CD8-positive, alpha-beta T cell (primary cell): ENCODE measurements at regions of chr2 and their contacts with region 1.

Region 1: GRCh38 chr2:12716282-12717190 is at the start of gene TRIB2:
- DNase-seq: peak; percentile 86 to 96 (median 91)
- ATAC-seq: peak; percentile 79
- H3K4me3 ChIP-seq: peak within 1 kb of the TSS; percentile 82 to 96
- H3K4me3 Mint-ChIP-seq: peak within 1 kb of the TSS; percentile 97
- H3K27ac ChIP-seq: peak within 1 kb of the TSS; percentile 72 to 81
- H3K27ac Mint-ChIP-seq: peak within 1 kb of the TSS; percentile 93
- H3K4me1 ChIP-seq: peaks cover 35% of the 10 kb centered on the region
- H3K4me1 Mint-ChIP-seq: peaks cover 46% of the 10 kb centered on the region
- H3K27me3 ChIP-seq: no peaks in the 10 kb centered on the region
- H3K27me3 Mint-ChIP-seq: no peaks in the 10 kb centered on the region
- CTCF ChIP-seq: peak; percentile 38
- total RNA-seq, gene TRIB2: 46.6 to 54.4 TPM

Region 2: DNA sequence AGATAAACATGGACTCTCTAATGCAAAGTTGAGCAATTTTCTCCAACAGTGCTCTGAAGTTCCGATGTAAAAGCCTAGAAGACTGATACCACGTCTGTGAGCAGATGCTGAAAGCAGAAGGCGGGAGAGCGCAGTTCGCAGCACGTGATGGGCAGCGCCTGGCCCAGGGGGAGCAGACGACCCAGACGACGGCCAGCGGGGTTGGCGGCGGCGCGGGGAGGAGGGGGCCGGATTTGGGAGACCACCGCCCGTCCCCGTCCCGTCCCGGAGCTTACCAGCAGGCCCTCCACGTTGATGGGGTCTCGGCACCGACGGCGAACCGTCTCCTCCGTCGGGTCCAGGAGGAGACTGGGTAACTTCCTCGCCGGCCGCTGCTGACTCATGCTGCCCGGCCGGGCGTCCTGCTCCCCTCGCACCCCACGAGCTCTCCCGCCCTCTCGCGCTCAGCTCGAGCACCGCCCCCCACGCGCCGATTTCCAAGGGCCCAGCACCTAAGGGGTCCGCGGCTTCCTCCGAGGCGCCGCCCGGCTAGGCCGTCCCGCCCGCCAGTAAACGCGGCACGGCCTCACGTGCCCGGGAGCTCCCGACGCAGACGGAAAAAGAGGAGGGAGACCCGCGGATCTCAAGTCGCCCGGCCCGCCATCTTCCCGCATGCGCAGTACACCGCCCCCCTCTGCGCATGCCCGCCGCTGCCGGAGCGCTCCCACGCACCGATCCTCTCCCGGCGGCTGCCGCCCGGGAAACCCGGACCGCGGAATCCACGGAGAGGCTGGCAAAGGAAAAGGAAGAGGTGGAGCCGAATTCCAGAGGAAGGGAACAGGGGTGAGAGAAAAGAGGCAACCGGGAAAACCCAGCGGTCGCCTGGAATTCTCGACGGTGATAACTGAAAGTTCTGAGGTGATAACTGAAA is 1250.8 kb before region 1 on chr2 and contains the start of gene E2F6:
- CTCF ChIA-PET with region 1: no interaction called
- POLR2A ChIA-PET with region 1: no interaction called
- intact Hi-C with region 1: loop called in 1 of 2 experiments (anchors 5 kb)
- DNase-seq: peak; percentile 68 to 91 (median 81)
- ATAC-seq: peak; percentile 85
- H3K4me3 ChIP-seq: peak within 1 kb of the TSS; percentile 83 to 87
- H3K4me3 Mint-ChIP-seq: peak within 1 kb of the TSS; percentile 96
- H3K27ac ChIP-seq: peak within 1 kb of the TSS; percentile 51 to 70
- H3K27ac Mint-ChIP-seq: peak within 1 kb of the TSS; percentile 91
- H3K4me1 ChIP-seq: peaks cover 13% of the 10 kb centered on the region
- H3K4me1 Mint-ChIP-seq: peaks cover 37% of the 10 kb centered on the region
- H3K27me3 ChIP-seq: no peaks in the 10 kb centered on the region
- H3K27me3 Mint-ChIP-seq: no peaks in the 10 kb centered on the region
- CTCF ChIP-seq: no peak
- total RNA-seq, gene E2F6: 4.9 to 5.0 TPM

Region 3: DNA sequence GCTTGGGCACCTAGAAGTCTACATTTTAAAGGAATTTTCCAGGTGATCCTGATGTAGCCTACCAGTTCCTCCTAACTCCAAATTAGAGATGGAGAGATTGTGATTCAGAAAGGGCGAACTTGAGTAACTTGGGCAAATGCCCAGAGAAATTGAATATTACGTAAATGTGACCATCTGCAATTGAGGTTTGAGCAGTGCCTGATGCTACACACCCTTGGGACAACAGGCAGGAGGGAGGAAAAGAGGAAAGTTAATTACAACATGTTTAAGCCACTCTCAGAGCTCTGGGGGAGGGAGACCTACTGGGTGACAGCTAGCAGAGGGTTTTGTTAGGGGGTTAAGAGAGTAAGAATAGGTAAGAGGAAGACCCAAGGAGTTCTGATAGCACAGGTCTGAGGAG is 761.2 kb before region 1 on chr2:
- CTCF ChIA-PET with region 1: interaction called, 3 read pairs
- POLR2A ChIA-PET with region 1: no interaction called
- intact Hi-C with region 1: loop called in 1 of 2 experiments (anchors 10 kb)
- DNase-seq: no peak
- ATAC-seq: no peak
- H3K4me3 ChIP-seq: no peak overlapping the region
- H3K4me3 Mint-ChIP-seq: no peak overlapping the region
- H3K27ac ChIP-seq: no peak overlapping the region
- H3K27ac Mint-ChIP-seq: no peak overlapping the region
- H3K4me1 ChIP-seq: no peaks in the 10 kb centered on the region
- H3K4me1 Mint-ChIP-seq: peaks cover 5% of the 10 kb centered on the region
- H3K27me3 ChIP-seq: no peaks in the 10 kb centered on the region
- H3K27me3 Mint-ChIP-seq: peaks cover 6% of the 10 kb centered on the region
- CTCF ChIP-seq: no peak

Region 4: GRCh38 chr2:12176623-12177454 is 539.7 kb before region 1 on chr2:
- CTCF ChIA-PET with region 1: no interaction called
- POLR2A ChIA-PET with region 1: interaction called, 3 read pairs
- intact Hi-C with region 1: loop called in 1 of 2 experiments (anchors 5 kb)
- DNase-seq: peak in 2 of 9 experiments; percentile 27 to 31
- ATAC-seq: peak; percentile 30
- H3K4me3 ChIP-seq: no peak overlapping the region
- H3K4me3 Mint-ChIP-seq: peak overlapping the region; percentile 66
- H3K27ac ChIP-seq: no peak overlapping the region
- H3K27ac Mint-ChIP-seq: peak overlapping the region; percentile 69
- H3K4me1 ChIP-seq: peaks cover 27% of the 10 kb centered on the region
- H3K4me1 Mint-ChIP-seq: peaks cover 50% of the 10 kb centered on the region
- H3K27me3 ChIP-seq: no peaks in the 10 kb centered on the region
- H3K27me3 Mint-ChIP-seq: no peaks in the 10 kb centered on the region
- CTCF ChIP-seq: no peak

Region 5: GRCh38 chr2:12456293-12457151 is 260.0 kb before region 1 on chr2:
- CTCF ChIA-PET with region 1: interaction called, 11 read pairs
- POLR2A ChIA-PET with region 1: interaction called, 3 read pairs
- intact Hi-C with region 1: no loop called
- DNase-seq: peak; percentile 23 to 76 (median 47)
- ATAC-seq: peak; percentile 81
- H3K4me3 ChIP-seq: peak overlapping the region; percentile 37 to 50
- H3K4me3 Mint-ChIP-seq: peak overlapping the region; percentile 83
- H3K27ac ChIP-seq: peak overlapping the region; percentile 39 to 78
- H3K27ac Mint-ChIP-seq: peak overlapping the region; percentile 95
- H3K4me1 ChIP-seq: peaks cover 14% of the 10 kb centered on the region
- H3K4me1 Mint-ChIP-seq: peaks cover 36% of the 10 kb centered on the region
- H3K27me3 ChIP-seq: no peaks in the 10 kb centered on the region
- H3K27me3 Mint-ChIP-seq: no peaks in the 10 kb centered on the region
- CTCF ChIP-seq: no peak

Region 6: DNA sequence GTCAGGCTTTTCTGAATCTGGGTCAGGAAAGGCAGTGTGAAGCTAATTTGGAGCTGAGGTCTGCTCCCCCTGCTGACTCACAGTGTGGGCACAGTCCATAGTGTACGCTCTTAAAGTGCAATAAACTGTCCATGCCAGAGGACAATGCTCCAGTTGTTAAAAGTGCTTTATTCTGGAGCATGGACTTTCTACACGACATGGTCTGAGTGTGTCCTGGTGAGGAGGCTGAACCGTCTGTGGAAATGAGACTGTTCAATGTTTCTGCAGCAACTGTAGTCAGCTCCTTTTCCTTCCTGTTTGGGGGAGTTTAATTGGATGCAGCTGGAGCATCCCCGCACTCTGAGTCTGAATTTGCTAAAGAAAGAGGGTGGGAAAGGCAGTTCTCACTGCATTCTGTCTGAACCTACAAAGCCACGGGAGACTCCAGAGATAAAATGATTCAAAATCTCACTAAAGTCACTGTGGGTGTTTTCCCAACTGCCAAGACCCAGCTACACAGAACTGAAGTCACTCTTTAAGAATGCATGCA is 110.0 kb before region 1 on chr2:
- CTCF ChIA-PET with region 1: interaction called, 3 read pairs
- POLR2A ChIA-PET with region 1: no interaction called
- intact Hi-C with region 1: loop called in 1 of 2 experiments (anchors 5 kb)
- DNase-seq: peak in 2 of 9 experiments; percentile 24 to 27
- ATAC-seq: no peak
- H3K4me3 ChIP-seq: no peak overlapping the region
- H3K4me3 Mint-ChIP-seq: no peak overlapping the region
- H3K27ac ChIP-seq: no peak overlapping the region
- H3K27ac Mint-ChIP-seq: no peak overlapping the region
- H3K4me1 ChIP-seq: peaks cover 8% of the 10 kb centered on the region
- H3K4me1 Mint-ChIP-seq: peaks cover 17% of the 10 kb centered on the region
- H3K27me3 ChIP-seq: no peaks in the 10 kb centered on the region
- H3K27me3 Mint-ChIP-seq: no peaks in the 10 kb centered on the region
- CTCF ChIP-seq: no peak

Region 7: GRCh38 chr2:12694990-12695774 is 21.4 kb before region 1 on chr2:
- CTCF ChIA-PET with region 1: no interaction called
- POLR2A ChIA-PET with region 1: no interaction called
- intact Hi-C with region 1: no loop called
- DNase-seq: no peak
- ATAC-seq: no peak
- H3K4me3 ChIP-seq: no peak overlapping the region
- H3K4me3 Mint-ChIP-seq: no peak overlapping the region
- H3K27ac ChIP-seq: no peak overlapping the region
- H3K27ac Mint-ChIP-seq: no peak overlapping the region
- H3K4me1 ChIP-seq: no peaks in the 10 kb centered on the region
- H3K4me1 Mint-ChIP-seq: no peaks in the 10 kb centered on the region
- H3K27me3 ChIP-seq: no peaks in the 10 kb centered on the region
- H3K27me3 Mint-ChIP-seq: no peaks in the 10 kb centered on the region
- CTCF ChIP-seq: no peak

Region 8: GRCh38 chr2:12931186-12931844 is 214.8 kb after region 1 on chr2:
- CTCF ChIA-PET with region 1: interaction called, 40 read pairs
- POLR2A ChIA-PET with region 1: interaction called, 15 read pairs
- intact Hi-C with region 1: loop called (anchors 1 to 5 kb)
- DNase-seq: peak in 3 of 9 experiments; percentile 6 to 51 (median 28)
- ATAC-seq: peak; percentile 40
- H3K4me3 ChIP-seq: no peak overlapping the region
- H3K4me3 Mint-ChIP-seq: no peak overlapping the region
- H3K27ac ChIP-seq: no peak overlapping the region
- H3K27ac Mint-ChIP-seq: no peak overlapping the region
- H3K4me1 ChIP-seq: no peaks in the 10 kb centered on the region
- H3K4me1 Mint-ChIP-seq: no peaks in the 10 kb centered on the region
- H3K27me3 ChIP-seq: no peaks in the 10 kb centered on the region
- H3K27me3 Mint-ChIP-seq: peaks cover 2% of the 10 kb centered on the region
- CTCF ChIP-seq: peak; percentile 70

Region 9: GRCh38 chr2:14072338-14072737 is 1355.8 kb after region 1 on chr2:
- CTCF ChIA-PET with region 1: no interaction called
- POLR2A ChIA-PET with region 1: no interaction called
- intact Hi-C with region 1: no loop called
- DNase-seq: no peak
- ATAC-seq: no peak
- H3K4me3 ChIP-seq: no peak overlapping the region
- H3K4me3 Mint-ChIP-seq: no peak overlapping the region
- H3K27ac ChIP-seq: no peak overlapping the region
- H3K27ac Mint-ChIP-seq: no peak overlapping the region
- H3K4me1 ChIP-seq: no peaks in the 10 kb centered on the region
- H3K4me1 Mint-ChIP-seq: no peaks in the 10 kb centered on the region
- H3K27me3 ChIP-seq: no peaks in the 10 kb centered on the region
- H3K27me3 Mint-ChIP-seq: no peaks in the 10 kb centered on the region
- CTCF ChIP-seq: no peak